HCT116 (cell line): ENCODE measurements at regions of chr1 and their contacts with region 1.

Region 1: DNA sequence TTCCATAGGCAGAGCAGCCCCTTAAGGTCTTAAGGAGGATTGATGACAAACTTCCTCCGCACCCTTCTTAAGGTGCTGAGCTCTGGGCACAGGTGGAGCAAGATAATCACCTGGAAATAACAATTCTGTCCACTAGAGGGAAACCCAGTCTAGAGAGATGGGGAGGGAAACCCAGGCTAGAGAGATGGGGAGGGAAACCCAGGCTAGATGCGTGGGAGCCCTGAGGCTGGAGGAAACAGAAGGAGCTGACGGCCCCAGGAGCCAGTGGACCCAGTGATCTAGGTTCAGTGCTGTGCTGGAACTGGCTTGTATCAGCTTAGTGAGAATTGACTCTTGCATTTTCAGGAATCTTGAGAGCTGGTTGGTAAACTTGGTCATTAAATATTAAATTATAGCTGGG is 17.8 kb upstream of the MYCL start:
- DNase-seq: peak; percentile 68
- ATAC-seq: peak; percentile 99
- H3K4me3 ChIP-seq: no peak overlapping the region
- H3K27ac ChIP-seq: no peak overlapping the region
- H3K4me1 ChIP-seq: peaks cover 0 to 5% of the 10 kb centered on the region in 2 experiments; a peak in 1 of 4 replicates
- H3K27me3 ChIP-seq: no peaks in the 10 kb centered on the region
- CTCF ChIP-seq: peak; percentile 66 to 91 (median 71)
- POLR2A ChIP-seq: no peak
- RAD21 ChIP-seq: peak; percentile 94

Region 2: GRCh38 chr1:39901698-39902459 is 17.7 kb before region 1 on chr1 and contains the start of gene MYCL:
- CTCF ChIA-PET with region 1: interaction called, 21 read pairs
- POLR2A ChIA-PET with region 1: interaction called, 3 read pairs
- RAD21 ChIA-PET with region 1: interaction called in 1 of 2 experiments, 6 read pairs
- intact Hi-C with region 1: no loop called
- DNase-seq: peak; percentile 87
- ATAC-seq: peak; percentile 93
- H3K4me3 ChIP-seq: peak within 1 kb of the TSS; percentile 72 to 76
- H3K27ac ChIP-seq: peak within 1 kb of the TSS; percentile 58; the same call in 1 of the 2 replicates
- H3K4me1 ChIP-seq: peaks cover 18 to 33% of the 10 kb centered on the region in 2 experiments
- H3K27me3 ChIP-seq: no peaks in the 10 kb centered on the region
- CTCF ChIP-seq: peak; percentile 76 to 87 (median 78)
- POLR2A ChIP-seq: peak; percentile 60
- RAD21 ChIP-seq: peak; percentile 82
- total RNA-seq, gene MYCL: 10.0 TPM

Region 3: DNA sequence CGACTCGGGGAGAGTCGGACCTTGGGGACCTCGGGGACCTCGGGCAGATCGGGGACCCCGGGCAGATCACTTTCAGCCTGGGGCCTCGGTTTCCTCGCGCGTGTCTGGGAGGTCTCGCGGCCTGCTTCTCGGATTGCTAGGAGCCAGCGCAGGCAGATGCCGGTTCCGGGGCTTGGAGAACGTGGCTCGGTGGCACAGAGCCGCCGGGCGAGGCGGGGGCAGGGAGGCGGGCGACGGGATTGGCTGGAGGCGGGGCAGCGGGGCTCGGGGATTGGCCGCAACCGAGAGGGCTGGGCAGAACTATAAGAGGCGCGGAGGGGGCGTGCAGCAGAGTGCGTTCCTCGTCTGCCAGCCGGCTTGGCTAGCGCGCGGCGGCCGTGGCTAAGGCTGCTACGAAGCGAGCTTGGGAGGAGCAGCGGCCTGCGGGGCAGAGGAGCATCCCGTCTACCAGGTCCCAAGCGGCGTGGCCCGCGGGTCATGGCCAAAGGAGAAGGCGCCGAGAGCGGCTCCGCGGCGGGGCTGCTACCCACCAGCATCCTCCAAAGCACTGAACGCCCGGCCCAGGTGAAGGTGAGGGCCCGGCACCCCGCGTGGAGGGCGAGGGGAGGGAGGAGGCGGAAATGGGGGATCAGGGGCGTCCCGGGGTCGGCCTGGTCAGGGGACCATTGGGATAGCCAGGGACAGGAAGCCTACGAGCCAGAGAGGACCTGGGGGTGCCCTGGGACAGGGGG is 35.4 kb after region 1 on chr1 and contains the start of gene MFSD2A:
- CTCF ChIA-PET with region 1: interaction called, 11 read pairs
- POLR2A ChIA-PET with region 1: interaction called, 4 read pairs
- RAD21 ChIA-PET with region 1: interaction called in 1 of 2 experiments, 5 read pairs
- intact Hi-C with region 1: no loop called
- DNase-seq: peak; percentile 73
- ATAC-seq: peak; percentile 95
- H3K4me3 ChIP-seq: peak within 1 kb of the TSS; percentile 75 to 89
- H3K27ac ChIP-seq: peak within 1 kb of the TSS; percentile 13; the same call in 1 of the 2 replicates
- H3K4me1 ChIP-seq: peaks cover 10 to 23% of the 10 kb centered on the region in 2 experiments
- H3K27me3 ChIP-seq: no peaks in the 10 kb centered on the region
- CTCF ChIP-seq: no peak
- POLR2A ChIP-seq: peak; percentile 47
- RAD21 ChIP-seq: no peak
- total RNA-seq, gene MFSD2A: 8.0 TPM

Region 4: DNA sequence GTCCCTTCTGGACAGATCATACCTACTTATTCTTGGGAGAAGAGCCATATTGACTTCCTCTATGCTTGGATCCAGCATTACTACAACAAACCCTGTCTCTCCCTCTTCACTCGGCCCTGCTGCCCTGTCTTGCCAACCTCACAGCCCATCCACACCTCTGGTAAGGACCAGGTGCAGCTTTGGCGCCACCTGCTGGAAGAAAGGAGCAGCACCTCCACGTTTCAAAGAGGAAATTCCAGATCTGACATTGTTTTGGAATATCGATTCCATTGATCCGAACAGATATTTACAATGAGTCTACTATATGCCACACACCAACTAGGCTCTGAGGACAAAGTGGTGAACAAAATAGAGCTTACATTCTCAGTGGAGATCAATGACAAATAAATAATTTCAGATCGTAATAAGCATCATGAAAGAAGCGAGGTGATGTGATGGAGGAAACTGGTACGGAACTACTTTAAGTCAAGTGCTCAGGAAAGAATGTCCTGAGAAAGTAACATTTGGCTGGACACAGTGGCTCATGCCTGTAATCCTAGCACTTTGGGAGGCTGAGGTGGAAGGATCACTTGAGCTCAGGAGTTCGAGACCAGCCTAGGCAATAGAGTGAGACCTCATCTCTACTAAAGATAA is 54.1 kb after region 1 on chr1:
- CTCF ChIA-PET with region 1: interaction called, 56 read pairs
- POLR2A ChIA-PET with region 1: no interaction called
- RAD21 ChIA-PET with region 1: interaction called, 6 to 7 read pairs
- intact Hi-C with region 1: loop called (anchors 1 kb)
- DNase-seq: peak; percentile 45
- ATAC-seq: peak; percentile 89
- H3K4me3 ChIP-seq: no peak overlapping the region
- H3K27ac ChIP-seq: no peak overlapping the region
- H3K4me1 ChIP-seq: peaks cover 6 to 9% of the 10 kb centered on the region in 2 experiments; a peak in 3 of 4 replicates
- H3K27me3 ChIP-seq: no peaks in the 10 kb centered on the region
- CTCF ChIP-seq: peak; percentile 96 to 99 (median 98)
- POLR2A ChIP-seq: no peak
- RAD21 ChIP-seq: peak; percentile 98

Region 5: GRCh38 chr1:40032240-40032891 is 112.8 kb after region 1 on chr1:
- CTCF ChIA-PET with region 1: interaction called, 59 read pairs
- POLR2A ChIA-PET with region 1: no interaction called
- RAD21 ChIA-PET with region 1: interaction called, 11 to 16 read pairs
- intact Hi-C with region 1: loop called (anchors 1 kb)
- DNase-seq: peak; percentile 35
- ATAC-seq: peak; percentile 89
- H3K4me3 ChIP-seq: no peak overlapping the region
- H3K27ac ChIP-seq: no peak overlapping the region
- H3K4me1 ChIP-seq: peaks cover 0 to 5% of the 10 kb centered on the region in 2 experiments; a peak in 1 of 4 replicates
- H3K27me3 ChIP-seq: no peaks in the 10 kb centered on the region
- CTCF ChIP-seq: peak; percentile 27 to 73 (median 69); a peak in 5 of 6 replicates
- POLR2A ChIP-seq: no peak
- RAD21 ChIP-seq: peak; percentile 75